Naive thymus-derived CD4-positive, alpha-beta T cell (primary cell): ENCODE measurements at regions of chr4 and their contacts with region 1.

Region 1: GRCh38 chr4:185183619-185184281 is 20.1 kb downstream of the CFAP97 start:
- DNase-seq: peak; percentile 42 to 78 (median 73)
- ATAC-seq: peak; percentile 84
- H3K4me3 ChIP-seq: no peak overlapping the region
- H3K4me3 Mint-ChIP-seq: no peak overlapping the region
- H3K27ac ChIP-seq: no peak overlapping the region
- H3K27ac Mint-ChIP-seq: no peak overlapping the region
- H3K4me1 ChIP-seq: no peaks in the 10 kb centered on the region
- H3K4me1 Mint-ChIP-seq: peaks cover 16 to 63% (median 39%) of the 10 kb centered on the region in 7 donors
- H3K27me3 ChIP-seq: no peaks in the 10 kb centered on the region
- H3K27me3 Mint-ChIP-seq: no peaks in the 10 kb centered on the region

Region 2: DNA sequence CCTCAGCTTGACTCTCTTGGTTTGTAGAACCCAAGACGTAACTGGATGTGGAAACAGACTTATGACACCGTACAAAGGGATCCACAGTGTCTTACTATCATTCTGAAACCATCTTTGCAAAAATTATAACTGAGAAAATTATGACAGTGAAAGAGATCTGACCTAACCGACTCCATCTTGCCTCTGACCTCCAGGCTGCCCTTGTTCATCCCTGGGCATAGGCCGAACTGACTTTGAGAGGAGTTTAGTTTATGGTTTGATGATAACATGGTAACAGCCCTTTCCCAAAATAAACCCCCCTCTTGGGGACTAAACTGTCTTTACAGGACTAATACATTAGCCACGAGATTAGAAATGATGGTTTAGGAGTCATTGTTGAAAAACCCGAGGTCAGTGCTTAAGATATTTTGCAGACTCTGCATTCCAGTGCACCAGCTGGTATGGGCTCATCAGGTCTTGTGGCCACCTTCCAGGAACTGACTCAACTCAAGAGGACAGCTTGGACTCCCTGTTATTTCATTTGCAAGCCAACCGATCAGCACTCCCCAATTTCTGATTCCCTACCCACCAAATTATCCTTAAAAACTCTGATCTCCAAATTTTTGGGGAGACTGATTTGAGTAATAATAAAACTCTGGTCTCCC is 584.1 kb before region 1 on chr4:
- CTCF ChIA-PET with region 1: no interaction called
- POLR2A ChIA-PET with region 1: no interaction called
- intact Hi-C with region 1: no loop called
- DNase-seq: no peak
- ATAC-seq: no peak
- H3K4me3 ChIP-seq: no peak overlapping the region
- H3K4me3 Mint-ChIP-seq: no peak overlapping the region
- H3K27ac ChIP-seq: no peak overlapping the region
- H3K27ac Mint-ChIP-seq: no peak overlapping the region
- H3K4me1 ChIP-seq: no peaks in the 10 kb centered on the region
- H3K4me1 Mint-ChIP-seq: peaks cover 4 to 20% (median 12%) of the 10 kb centered on the region in 7 donors
- H3K27me3 ChIP-seq: no peaks in the 10 kb centered on the region
- H3K27me3 Mint-ChIP-seq: peaks cover 0 to 27% (median 6%) of the 10 kb centered on the region in 5 donors

Region 3: DNA sequence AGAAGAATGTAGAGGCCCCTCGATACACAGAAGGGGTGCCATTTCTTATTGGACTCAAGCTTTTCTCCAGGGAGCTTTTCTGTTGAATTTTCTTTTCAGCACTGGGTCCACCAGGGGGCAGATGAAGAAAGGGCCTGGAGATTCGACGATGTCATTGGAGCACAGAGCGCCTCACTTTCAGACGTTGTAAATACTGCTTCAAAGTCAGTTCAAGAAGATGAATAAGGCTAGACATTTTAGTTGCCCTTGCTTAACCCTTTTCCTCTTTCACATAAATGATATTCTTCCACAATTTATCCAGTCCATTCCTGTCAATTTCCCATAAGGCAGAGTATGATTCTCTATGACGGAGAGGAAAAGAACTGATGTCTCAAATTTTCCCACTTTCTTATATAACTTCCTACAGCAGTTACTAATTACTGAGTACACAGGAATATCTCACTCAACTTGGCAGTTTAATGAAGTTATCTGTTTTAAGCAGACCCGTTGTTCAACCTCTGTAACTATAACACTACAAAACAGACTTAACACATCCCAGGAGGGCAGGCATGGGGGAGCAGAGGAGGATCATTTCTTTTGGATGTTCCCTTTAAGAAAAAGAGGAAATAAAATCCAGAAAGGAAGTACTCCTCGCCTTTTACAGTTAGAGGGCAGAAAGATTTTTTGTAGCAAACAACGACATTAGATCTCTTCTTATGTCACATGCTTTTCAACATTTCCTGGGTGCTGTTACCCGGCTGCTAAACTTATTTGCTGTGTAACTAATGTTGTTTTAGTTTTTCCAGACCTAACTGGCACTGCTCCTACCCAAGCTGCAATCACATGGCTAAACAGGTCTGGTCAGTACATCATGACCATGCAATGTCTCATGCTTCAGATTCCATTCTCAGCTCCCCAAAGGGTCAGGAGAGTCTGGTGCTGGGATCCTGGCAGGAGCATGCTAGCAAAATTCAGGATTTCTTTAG is 437.6 kb before region 1 on chr4:
- CTCF ChIA-PET with region 1: interaction called, 3 read pairs
- POLR2A ChIA-PET with region 1: no interaction called
- intact Hi-C with region 1: loop called in 1 of 2 experiments (anchors 1 kb)
- DNase-seq: peak; percentile 37 to 82 (median 76)
- ATAC-seq: peak; percentile 93
- H3K4me3 ChIP-seq: no peak overlapping the region
- H3K4me3 Mint-ChIP-seq: peak overlapping the region; percentile 18 to 73 (median 54)
- H3K27ac ChIP-seq: peak overlapping the region; percentile 30
- H3K27ac Mint-ChIP-seq: peak overlapping the region; percentile 58 to 90 (median 88)
- H3K4me1 ChIP-seq: peaks cover 0 to 14% of the 10 kb centered on the region in 2 donors
- H3K4me1 Mint-ChIP-seq: peaks cover 16 to 20% (median 18%) of the 10 kb centered on the region in 7 donors
- H3K27me3 ChIP-seq: no peaks in the 10 kb centered on the region
- H3K27me3 Mint-ChIP-seq: peaks cover 0 to 3% (median 0%) of the 10 kb centered on the region in 5 donors

Region 4: DNA sequence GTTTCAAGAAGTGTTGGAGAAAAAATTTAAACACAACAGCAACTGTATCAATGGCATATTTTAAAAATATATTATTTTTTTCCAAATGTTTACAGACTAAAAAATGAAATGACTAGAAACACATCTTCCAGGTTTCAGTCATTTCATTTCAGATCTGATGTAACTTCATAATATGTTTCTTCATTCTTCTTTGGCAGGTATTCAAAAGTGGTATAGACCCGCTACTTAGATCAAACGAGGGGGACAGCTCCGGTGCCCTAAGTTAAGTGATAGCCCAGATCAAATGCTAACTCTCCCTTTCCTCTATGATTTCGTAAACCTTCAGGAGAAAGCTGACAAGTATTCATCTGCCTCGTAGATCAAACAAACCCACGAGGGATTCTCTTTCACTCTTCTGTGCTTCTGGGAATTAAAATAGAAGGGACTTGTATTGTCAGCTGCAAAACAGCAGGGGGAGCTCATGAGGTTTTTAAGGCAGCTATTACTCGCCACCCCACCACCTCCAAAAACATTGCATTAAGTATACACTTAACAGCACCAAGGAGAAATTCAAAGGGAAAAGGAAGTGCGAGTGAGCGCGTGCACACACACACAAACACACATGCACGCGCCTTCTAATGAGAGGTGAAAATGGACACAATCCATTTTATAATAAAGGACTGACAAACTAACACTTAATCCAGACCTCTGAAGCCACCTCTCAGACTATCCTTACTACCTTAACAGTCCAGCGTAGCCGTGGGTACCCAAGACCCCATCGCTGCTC is 144.1 kb before region 1 on chr4:
- CTCF ChIA-PET with region 1: interaction called, 8 read pairs
- POLR2A ChIA-PET with region 1: interaction called, 3 read pairs
- intact Hi-C with region 1: loop called (anchors 1 kb)
- DNase-seq: peak in 7 of 9 donors; percentile 14 to 63 (median 57)
- ATAC-seq: peak; percentile 82
- H3K4me3 ChIP-seq: no peak overlapping the region
- H3K4me3 Mint-ChIP-seq: peak overlapping the region in 7 of 10 donors; percentile 9 to 76 (median 37)
- H3K27ac ChIP-seq: no peak overlapping the region
- H3K27ac Mint-ChIP-seq: no peak overlapping the region
- H3K4me1 ChIP-seq: peaks cover 0 to 2% of the 10 kb centered on the region in 2 donors
- H3K4me1 Mint-ChIP-seq: peaks cover 0 to 8% (median 5%) of the 10 kb centered on the region in 7 donors
- H3K27me3 ChIP-seq: no peaks in the 10 kb centered on the region
- H3K27me3 Mint-ChIP-seq: peaks cover 19 to 26% (median 22%) of the 10 kb centered on the region in 5 donors

Region 5: DNA sequence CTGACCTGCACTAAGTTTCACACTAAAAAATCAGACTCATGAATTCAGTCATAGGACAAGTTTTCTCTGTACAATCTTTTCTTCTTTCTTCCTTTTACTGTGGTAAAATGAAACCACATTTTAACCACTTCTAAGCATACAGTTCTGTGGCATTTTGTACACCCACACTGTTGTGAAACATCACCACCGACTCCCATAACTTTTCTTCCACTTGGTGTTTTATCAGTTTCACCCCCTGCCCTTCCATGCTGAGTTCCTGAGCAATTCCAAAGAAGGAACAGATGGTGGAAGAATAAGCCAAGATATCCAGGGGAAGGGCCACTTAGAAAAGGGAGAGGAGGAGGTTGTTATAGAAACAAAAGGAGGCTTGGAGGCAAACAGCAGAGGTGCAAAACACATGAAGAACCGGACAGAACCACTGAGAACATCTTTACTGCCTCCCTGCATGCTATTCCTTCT is 18.1 kb before region 1 on chr4:
- CTCF ChIA-PET with region 1: no interaction called
- POLR2A ChIA-PET with region 1: interaction called, 5 read pairs
- intact Hi-C with region 1: loop called in 1 of 2 experiments (anchors 2 kb)
- DNase-seq: peak in 7 of 9 donors; percentile 29 to 77 (median 71)
- ATAC-seq: peak; percentile 81
- H3K4me3 ChIP-seq: peak overlapping the region; percentile 0
- H3K4me3 Mint-ChIP-seq: peak overlapping the region; percentile 40 to 79 (median 66)
- H3K27ac ChIP-seq: no peak overlapping the region
- H3K27ac Mint-ChIP-seq: peak overlapping the region in 7 of 9 donors; percentile 21 to 82 (median 48)
- H3K4me1 ChIP-seq: peaks cover 14% of the 10 kb centered on the region in 2 donors
- H3K4me1 Mint-ChIP-seq: peaks cover 13 to 26% (median 20%) of the 10 kb centered on the region in 7 donors
- H3K27me3 ChIP-seq: no peaks in the 10 kb centered on the region
- H3K27me3 Mint-ChIP-seq: peaks cover 0 to 18% (median 0%) of the 10 kb centered on the region in 5 donors

Region 6: GRCh38 chr4:185304944-185305690 is 121.4 kb after region 1 on chr4:
- CTCF ChIA-PET with region 1: interaction called, 3 read pairs
- POLR2A ChIA-PET with region 1: no interaction called
- intact Hi-C with region 1: loop called in 1 of 2 experiments (anchors 1 kb)
- DNase-seq: peak in 7 of 9 donors; percentile 0 to 44 (median 36)
- ATAC-seq: peak; percentile 59
- H3K4me3 ChIP-seq: no peak overlapping the region
- H3K4me3 Mint-ChIP-seq: no peak overlapping the region
- H3K27ac ChIP-seq: no peak overlapping the region
- H3K27ac Mint-ChIP-seq: peak overlapping the region in 2 of 9 donors; percentile 25 to 75
- H3K4me1 ChIP-seq: no peaks in the 10 kb centered on the region
- H3K4me1 Mint-ChIP-seq: peaks cover 0 to 15% (median 0%) of the 10 kb centered on the region in 7 donors
- H3K27me3 ChIP-seq: no peaks in the 10 kb centered on the region
- H3K27me3 Mint-ChIP-seq: no peaks in the 10 kb centered on the region